AG04450 (cell line): ENCODE measurements at regions of chr11 and their contacts with region 1.

Region 1: GRCh38 chr11:131694526-131695424 is 324.4 kb downstream of the NTM start:
- DNase-seq: peak; percentile 44
- H3K4me3 ChIP-seq: peak overlapping the region; percentile 17; the same call in 1 of the 2 replicates
- H3K27ac ChIP-seq: no peak overlapping the region
- H3K27me3 ChIP-seq: no peaks in the 10 kb centered on the region
- CTCF ChIP-seq: peak; percentile 95

Region 2: GRCh38 chr11:131674051-131674755 is 20.6 kb before region 1 on chr11:
- CTCF ChIA-PET with region 1: interaction called, 70 read pairs
- POLR2A ChIA-PET with region 1: no interaction called
- DNase-seq: peak; percentile 74
- H3K4me3 ChIP-seq: no peak overlapping the region
- H3K27ac ChIP-seq: no peak overlapping the region
- H3K27me3 ChIP-seq: no peaks in the 10 kb centered on the region
- CTCF ChIP-seq: peak; percentile 99

Region 3: DNA sequence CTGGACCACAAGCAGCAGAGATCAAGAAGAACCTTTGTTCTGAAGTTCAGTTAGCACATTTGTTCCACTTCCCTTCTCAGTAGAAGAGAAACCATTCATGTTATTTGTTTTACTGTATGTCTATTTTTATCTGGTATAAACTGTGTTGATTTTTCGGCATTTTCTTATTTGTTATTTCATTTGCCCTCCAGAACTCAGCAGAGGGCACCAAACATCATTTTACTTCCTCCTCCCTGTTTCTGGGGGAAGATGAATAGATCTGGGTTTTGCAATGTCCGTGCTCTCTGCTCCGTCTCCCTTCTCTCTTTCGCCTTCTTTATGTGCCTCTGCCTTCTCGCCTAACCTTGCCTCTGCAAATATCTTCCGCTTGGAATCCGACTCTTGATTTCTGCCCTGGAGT is 42.6 kb after region 1 on chr11:
- CTCF ChIA-PET with region 1: interaction called, 25 read pairs
- POLR2A ChIA-PET with region 1: no interaction called
- DNase-seq: no peak
- H3K4me3 ChIP-seq: no peak overlapping the region
- H3K27ac ChIP-seq: no peak overlapping the region
- H3K27me3 ChIP-seq: peaks cover 9% of the 10 kb centered on the region
- CTCF ChIP-seq: no peak

Region 4: DNA sequence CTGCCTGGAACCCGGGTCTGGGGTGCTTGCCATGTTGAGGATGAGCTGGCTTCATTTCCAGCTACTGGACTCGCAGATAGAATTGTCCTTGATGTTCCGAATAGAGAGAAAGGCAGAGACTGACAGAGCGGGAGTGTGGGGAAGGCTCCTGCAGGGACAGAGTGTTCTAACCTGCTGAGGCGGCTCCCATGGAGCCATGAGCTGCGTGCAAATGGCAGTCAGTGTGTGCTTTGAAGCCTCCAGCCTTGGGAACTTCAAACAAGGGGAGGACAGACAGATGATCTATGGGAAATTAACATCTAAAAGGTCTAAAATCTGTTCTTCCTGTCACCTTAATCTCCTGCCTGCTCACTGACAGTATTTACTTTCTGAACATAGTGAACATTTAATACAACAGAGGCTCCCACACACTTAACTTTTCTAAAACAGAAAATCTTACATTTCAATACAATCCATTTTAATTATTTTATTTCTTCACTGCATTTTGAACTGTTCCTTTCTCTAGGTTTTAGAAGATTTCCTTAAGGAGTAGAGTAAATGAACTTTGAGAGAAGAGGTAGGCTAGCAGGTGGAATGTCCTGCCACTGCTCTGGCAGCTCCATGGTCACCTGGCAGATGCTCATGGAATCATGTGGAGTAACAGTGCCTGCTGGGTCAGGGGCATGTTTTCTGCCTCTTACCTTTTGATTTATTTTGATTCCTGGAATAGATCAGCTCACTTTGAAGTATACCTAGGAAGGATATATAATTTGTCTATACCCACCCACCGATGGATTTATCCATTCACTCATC is 157.4 kb after region 1 on chr11:
- CTCF ChIA-PET with region 1: interaction called, 16 read pairs
- POLR2A ChIA-PET with region 1: no interaction called
- DNase-seq: no peak
- H3K4me3 ChIP-seq: no peak overlapping the region
- H3K27ac ChIP-seq: no peak overlapping the region
- H3K27me3 ChIP-seq: peaks cover 21% of the 10 kb centered on the region
- CTCF ChIP-seq: no peak

Region 5: GRCh38 chr11:131910523-131911387 is 216.0 kb after region 1 on chr11:
- CTCF ChIA-PET with region 1: interaction called, 19 read pairs
- POLR2A ChIA-PET with region 1: no interaction called
- DNase-seq: no peak
- H3K4me3 ChIP-seq: peak overlapping the region; percentile 88
- H3K27ac ChIP-seq: peak overlapping the region; percentile 25
- H3K27me3 ChIP-seq: no peaks in the 10 kb centered on the region
- CTCF ChIP-seq: no peak; the same call in 1 of the 2 replicates

Region 6: GRCh38 chr11:133064152-133064877 is 1369.5 kb after region 1 on chr11:
- CTCF ChIA-PET with region 1: interaction called, 30 read pairs
- POLR2A ChIA-PET with region 1: no interaction called
- DNase-seq: peak; percentile 44
- H3K4me3 ChIP-seq: peak overlapping the region; percentile 67
- H3K27ac ChIP-seq: peak overlapping the region; percentile 31
- H3K27me3 ChIP-seq: peaks cover 3% of the 10 kb centered on the region
- CTCF ChIP-seq: peak; percentile 79